Activated CD8-positive, alpha-beta T cell treated with anti-CD3 and anti-CD28 coated beads, Interleukin-2, amount 10 ng/mL, durations not matched to agents 7 days and 5 days (primary cell): ENCODE measurements at regions of chr13 and their contacts with region 1.

Region 1: DNA sequence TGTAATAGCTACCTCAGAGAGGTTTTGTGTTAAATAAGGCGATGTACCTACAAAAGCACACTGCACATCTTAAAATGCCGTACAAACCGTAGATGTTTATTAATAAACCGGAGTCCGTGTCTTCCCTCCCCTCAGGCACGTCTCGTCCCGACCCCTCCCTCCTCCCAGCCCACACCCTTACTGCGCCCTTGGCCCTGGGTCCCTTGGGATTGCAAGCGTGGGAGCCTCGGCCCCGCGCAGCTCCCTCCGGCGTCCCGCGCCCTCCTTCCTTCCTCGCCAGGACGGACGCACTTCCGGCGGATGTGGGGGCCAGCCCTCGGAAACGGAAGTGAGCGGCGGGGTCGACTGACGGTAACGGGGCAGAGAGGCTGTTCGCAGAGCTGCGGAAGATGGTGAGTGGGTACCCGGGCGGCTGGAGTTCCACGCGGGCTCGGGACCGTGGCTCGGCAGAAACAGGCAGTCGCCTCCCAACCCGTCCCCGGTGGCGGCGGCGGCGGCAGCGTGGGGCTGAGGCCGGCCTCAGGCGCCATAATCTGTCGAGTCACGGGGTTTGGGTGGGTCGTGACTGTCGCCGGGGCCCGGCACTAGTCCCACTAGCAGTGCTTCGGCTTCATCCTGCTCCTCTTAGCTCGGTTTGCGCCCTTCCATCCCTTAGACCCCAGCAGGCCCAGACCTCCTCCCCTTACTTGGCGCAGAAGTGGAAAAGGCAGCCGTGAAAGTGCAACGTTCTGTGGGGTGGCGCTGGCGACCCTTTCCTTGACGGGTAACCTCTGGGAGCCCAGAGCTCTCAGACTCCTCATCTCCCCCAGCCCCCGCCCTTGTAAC is at the start of gene POMP:
- DNase-seq: peak; percentile 95
- ATAC-seq: peak; percentile 92
- H3K4me3 Mint-ChIP-seq: peak within 1 kb of the TSS; percentile 98
- H3K27ac Mint-ChIP-seq: peak within 1 kb of the TSS; percentile 97
- H3K4me1 Mint-ChIP-seq: peaks cover 58% of the 10 kb centered on the region
- H3K27me3 Mint-ChIP-seq: no peaks in the 10 kb centered on the region
- total RNA-seq, gene POMP: 90.7 to 94.5 TPM

Region 2: GRCh38 chr13:28324181-28324789 is 334.7 kb before region 1 on chr13:
- CTCF ChIA-PET with region 1: interaction called, 9 read pairs
- POLR2A ChIA-PET with region 1: interaction called, 10 read pairs
- DNase-seq: peak; percentile 77
- ATAC-seq: peak; percentile 53
- H3K4me3 Mint-ChIP-seq: no peak overlapping the region
- H3K27ac Mint-ChIP-seq: no peak overlapping the region
- H3K4me1 Mint-ChIP-seq: peaks cover 4% of the 10 kb centered on the region
- H3K27me3 Mint-ChIP-seq: no peaks in the 10 kb centered on the region

Region 3: GRCh38 chr13:28355822-28356371 is 303.1 kb before region 1 on chr13:
- CTCF ChIA-PET with region 1: no interaction called
- POLR2A ChIA-PET with region 1: interaction called, 11 read pairs
- DNase-seq: peak; percentile 57
- ATAC-seq: peak; percentile 85
- H3K4me3 Mint-ChIP-seq: peak overlapping the region; percentile 65
- H3K27ac Mint-ChIP-seq: peak overlapping the region; percentile 92
- H3K4me1 Mint-ChIP-seq: peaks cover 51% of the 10 kb centered on the region
- H3K27me3 Mint-ChIP-seq: peaks cover 3% of the 10 kb centered on the region

Region 4: GRCh38 chr13:28637714-28638355 is 21.2 kb before region 1 on chr13:
- CTCF ChIA-PET with region 1: interaction called, 6 read pairs
- POLR2A ChIA-PET with region 1: interaction called, 10 read pairs
- DNase-seq: no peak
- ATAC-seq: no peak
- H3K4me3 Mint-ChIP-seq: no peak overlapping the region
- H3K27ac Mint-ChIP-seq: no peak overlapping the region
- H3K4me1 Mint-ChIP-seq: peaks cover 16% of the 10 kb centered on the region
- H3K27me3 Mint-ChIP-seq: peaks cover 13% of the 10 kb centered on the region

Region 5: DNA sequence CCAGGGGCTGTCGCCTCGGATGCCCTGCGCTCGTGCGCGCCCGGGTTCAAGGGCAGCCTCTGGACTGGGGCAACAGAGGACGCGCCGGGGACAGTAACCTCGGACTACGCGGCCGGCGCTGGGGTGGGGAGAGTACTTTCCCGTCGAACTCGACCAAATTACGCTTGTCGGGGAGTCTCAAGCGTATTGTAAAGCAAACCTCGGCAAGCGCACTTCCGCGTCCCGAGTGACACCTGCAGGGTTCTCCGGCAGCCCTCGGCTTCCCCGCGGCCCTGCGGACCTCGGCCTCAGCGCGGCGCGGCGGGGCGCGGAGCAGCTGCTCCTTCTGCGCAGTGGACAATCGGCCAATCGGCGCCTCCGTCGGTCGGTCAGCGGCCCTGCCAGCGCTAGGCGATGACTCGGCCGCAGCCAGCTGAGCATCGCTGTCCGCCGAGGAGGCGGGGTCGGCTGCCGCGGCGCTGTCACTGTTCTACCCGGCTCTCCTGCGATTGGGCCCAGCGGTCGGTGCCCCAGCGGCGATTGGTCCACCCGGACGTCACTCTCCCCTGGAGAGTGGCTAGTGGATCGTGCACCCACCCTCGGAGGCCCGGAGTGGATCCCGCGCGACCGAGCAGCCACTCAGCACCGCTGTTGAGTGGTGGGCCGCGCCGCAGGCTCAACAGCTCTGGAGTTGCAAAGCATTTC is 59.7 kb after region 1 on chr13 and contains the start of gene SLC46A3:
- CTCF ChIA-PET with region 1: no interaction called
- POLR2A ChIA-PET with region 1: interaction called, 29 read pairs
- DNase-seq: peak; percentile 97
- ATAC-seq: peak; percentile 100
- H3K4me3 Mint-ChIP-seq: peak within 1 kb of the TSS; percentile 85
- H3K27ac Mint-ChIP-seq: peak within 1 kb of the TSS; percentile 87
- H3K4me1 Mint-ChIP-seq: peaks cover 29% of the 10 kb centered on the region
- H3K27me3 Mint-ChIP-seq: peaks cover 9% of the 10 kb centered on the region
- total RNA-seq, gene SLC46A3: 10.3 to 10.9 TPM